ENCODE measurements at regions of chr2 and their contacts with region 1.

Region 1: GRCh38 chr2:95165129-95166064 is at the start of gene ZNF2:
- DNase-seq: peak; percentile 91 to 99 (median 96)
- ATAC-seq: peak; percentile 92
- H3K4me3 ChIP-seq: peak within 1 kb of the TSS; percentile 97
- H3K4me3 Mint-ChIP-seq: peak within 1 kb of the TSS; percentile 97
- H3K27ac ChIP-seq: peak within 1 kb of the TSS; percentile 86 to 92
- H3K27ac Mint-ChIP-seq: peak within 1 kb of the TSS; percentile 96
- H3K4me1 ChIP-seq: peaks cover 15% of the 10 kb centered on the region
- H3K4me1 Mint-ChIP-seq: peaks cover 36% of the 10 kb centered on the region
- H3K27me3 ChIP-seq: no peaks in the 10 kb centered on the region
- H3K27me3 Mint-ChIP-seq: no peaks in the 10 kb centered on the region
- CTCF ChIP-seq: no peak
- total RNA-seq, gene ZNF2: 0.53 TPM in 1 of 2 experiments, not detected in the other

Region 2: GRCh38 chr2:95121407-95122196 is 43.8 kb before region 1 on chr2 and contains the start of gene MRPS5:
- CTCF ChIA-PET with region 1: interaction called, 6 read pairs
- POLR2A ChIA-PET with region 1: interaction called, 46 read pairs
- intact Hi-C with region 1: no loop called
- DNase-seq: peak; percentile 68 to 91 (median 82)
- ATAC-seq: peak; percentile 89
- H3K4me3 ChIP-seq: peak within 1 kb of the TSS; percentile 81
- H3K4me3 Mint-ChIP-seq: peak within 1 kb of the TSS; percentile 95
- H3K27ac ChIP-seq: peak within 1 kb of the TSS; percentile 59 to 74
- H3K27ac Mint-ChIP-seq: peak within 1 kb of the TSS; percentile 94
- H3K4me1 ChIP-seq: peaks cover 31% of the 10 kb centered on the region
- H3K4me1 Mint-ChIP-seq: peaks cover 52% of the 10 kb centered on the region
- H3K27me3 ChIP-seq: no peaks in the 10 kb centered on the region
- H3K27me3 Mint-ChIP-seq: no peaks in the 10 kb centered on the region
- CTCF ChIP-seq: no peak
- total RNA-seq, gene MRPS5: 15.3 to 16.3 TPM

Region 3: GRCh38 chr2:95185973-95186372 is 20.6 kb after region 1 on chr2:
- CTCF ChIA-PET with region 1: interaction called, 4 read pairs
- POLR2A ChIA-PET with region 1: no interaction called
- intact Hi-C with region 1: loop called in 1 of 2 experiments (anchors 1 kb)
- DNase-seq: no peak
- ATAC-seq: no peak
- H3K4me3 ChIP-seq: no peak overlapping the region
- H3K4me3 Mint-ChIP-seq: no peak overlapping the region
- H3K27ac ChIP-seq: no peak overlapping the region
- H3K27ac Mint-ChIP-seq: no peak overlapping the region
- H3K4me1 ChIP-seq: no peaks in the 10 kb centered on the region
- H3K4me1 Mint-ChIP-seq: no peaks in the 10 kb centered on the region
- H3K27me3 ChIP-seq: peaks cover 0 to 2% of the 10 kb centered on the region in 2 experiments
- H3K27me3 Mint-ChIP-seq: peaks cover 10% of the 10 kb centered on the region
- CTCF ChIP-seq: no peak

Region 4: DNA sequence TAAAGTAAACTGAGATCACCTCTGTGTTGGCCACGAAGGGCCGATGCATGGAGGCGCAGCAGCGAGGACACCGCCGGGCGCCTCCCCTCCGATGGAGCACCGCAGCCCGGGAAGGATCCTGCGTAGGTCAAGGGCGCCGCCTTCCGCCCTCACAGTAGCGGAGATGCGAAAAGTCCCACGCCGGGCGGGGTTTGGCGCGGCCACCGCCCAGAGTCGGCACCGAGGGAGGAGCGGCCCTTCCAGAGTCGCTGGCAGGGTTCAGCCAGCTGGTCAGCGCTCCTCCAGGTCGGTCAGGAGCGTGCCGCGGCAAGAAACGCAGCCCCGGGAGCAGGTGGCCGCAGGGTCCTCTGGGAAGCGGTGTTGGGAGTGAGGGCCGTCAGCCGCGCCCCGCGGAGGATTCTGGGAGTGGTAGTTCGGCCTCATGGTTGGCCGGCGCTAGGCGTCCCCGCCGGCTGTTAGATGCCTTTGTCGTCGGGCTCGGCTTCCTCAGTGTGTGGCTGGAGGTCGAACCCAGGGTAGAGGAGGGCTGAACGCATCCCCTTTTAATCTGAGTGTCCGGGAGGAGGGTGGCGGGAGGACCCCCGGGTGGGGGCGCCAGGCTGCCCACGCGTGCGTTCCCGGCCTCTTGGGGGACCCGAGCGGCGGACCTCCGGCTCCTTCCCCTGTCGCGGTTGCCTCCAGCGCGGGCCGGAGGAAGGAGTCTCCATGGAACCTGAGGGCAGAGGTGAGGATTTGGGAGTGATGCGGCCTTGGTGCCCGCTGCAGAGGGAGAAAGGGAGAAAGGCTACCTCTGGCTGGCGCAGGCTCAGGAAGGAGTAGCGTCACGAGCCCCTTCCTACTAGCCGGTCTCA is 41.9 kb after region 1 on chr2 and contains the start of gene ZNF892:
- CTCF ChIA-PET with region 1: no interaction called
- POLR2A ChIA-PET with region 1: no interaction called
- intact Hi-C with region 1: loop called (anchors 1 to 2 kb)
- DNase-seq: peak; percentile 55 to 87 (median 74)
- ATAC-seq: peak; percentile 95
- H3K4me3 ChIP-seq: peak within 1 kb of the TSS; percentile 89
- H3K4me3 Mint-ChIP-seq: peak within 1 kb of the TSS; percentile 95
- H3K27ac ChIP-seq: peak within 1 kb of the TSS; percentile 63 to 77
- H3K27ac Mint-ChIP-seq: peak within 1 kb of the TSS; percentile 80
- H3K4me1 ChIP-seq: peaks cover 17% of the 10 kb centered on the region
- H3K4me1 Mint-ChIP-seq: peaks cover 29% of the 10 kb centered on the region
- H3K27me3 ChIP-seq: no peaks in the 10 kb centered on the region
- H3K27me3 Mint-ChIP-seq: no peaks in the 10 kb centered on the region
- CTCF ChIP-seq: peak; percentile 61
- total RNA-seq, gene ZNF892: 0.82 to 1.1 TPM

Region 5: GRCh38 chr2:95259765-95260417 is 94.5 kb after region 1 on chr2:
- CTCF ChIA-PET with region 1: no interaction called
- POLR2A ChIA-PET with region 1: no interaction called
- intact Hi-C with region 1: no loop called
- DNase-seq: no peak
- ATAC-seq: no peak
- H3K4me3 ChIP-seq: no peak overlapping the region
- H3K4me3 Mint-ChIP-seq: no peak overlapping the region
- H3K27ac ChIP-seq: no peak overlapping the region
- H3K27ac Mint-ChIP-seq: no peak overlapping the region
- H3K4me1 ChIP-seq: no peaks in the 10 kb centered on the region
- H3K4me1 Mint-ChIP-seq: no peaks in the 10 kb centered on the region
- H3K27me3 ChIP-seq: peaks cover 0 to 4% of the 10 kb centered on the region in 2 experiments
- H3K27me3 Mint-ChIP-seq: peaks cover 25% of the 10 kb centered on the region
- CTCF ChIP-seq: no peak

Region 6: DNA sequence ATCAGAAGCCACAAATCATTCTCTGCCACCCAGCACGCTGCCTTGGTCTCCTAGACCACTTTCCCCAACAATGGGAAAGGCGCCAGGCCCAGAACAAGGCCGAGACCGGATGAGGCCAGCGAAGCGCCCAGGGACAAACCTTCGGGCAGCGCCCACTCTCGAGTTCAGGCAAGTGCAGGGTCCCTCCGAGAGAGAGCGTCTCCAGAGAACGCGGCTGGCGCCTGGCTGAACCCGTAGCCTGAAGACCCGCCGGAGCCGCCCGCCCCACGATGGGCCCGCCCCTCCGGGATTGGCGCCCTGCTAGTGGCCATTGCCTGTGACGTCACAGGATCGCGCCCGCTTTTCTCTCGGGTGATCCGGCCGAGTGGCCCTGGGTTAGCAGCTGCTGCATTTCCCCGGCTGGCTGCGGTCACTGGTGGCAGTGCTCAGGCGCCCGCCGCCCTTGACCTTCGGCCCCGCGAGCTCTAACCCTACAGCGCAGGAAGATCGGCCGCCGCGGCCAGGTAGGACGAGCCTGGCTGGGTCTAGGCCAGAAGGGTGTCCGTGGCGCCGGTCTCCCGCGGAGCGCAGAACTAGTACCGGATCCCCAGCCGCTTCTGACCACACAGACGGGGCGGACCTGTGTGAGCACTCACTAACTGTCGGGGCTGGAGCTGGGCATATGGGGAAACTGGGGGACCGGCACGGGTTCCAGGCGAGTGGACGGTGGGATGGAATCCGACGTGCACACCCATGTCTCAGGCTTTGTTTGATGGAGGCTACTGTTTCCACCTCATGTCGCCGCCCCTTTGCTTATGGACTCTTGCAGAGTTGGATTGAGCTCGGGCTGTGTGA is 237.2 kb after region 1 on chr2 and contains the start of gene FAHD2A:
- CTCF ChIA-PET with region 1: no interaction called
- POLR2A ChIA-PET with region 1: interaction called, 8 read pairs
- intact Hi-C with region 1: loop called (anchors 1 kb)
- DNase-seq: peak; percentile 81 to 95 (median 92)
- ATAC-seq: peak; percentile 93
- H3K4me3 ChIP-seq: peak within 1 kb of the TSS; percentile 79
- H3K4me3 Mint-ChIP-seq: peak within 1 kb of the TSS; percentile 99
- H3K27ac ChIP-seq: peak within 1 kb of the TSS; percentile 41 to 57
- H3K27ac Mint-ChIP-seq: peak within 1 kb of the TSS; percentile 88
- H3K4me1 ChIP-seq: peaks cover 17% of the 10 kb centered on the region
- H3K4me1 Mint-ChIP-seq: peaks cover 27% of the 10 kb centered on the region
- H3K27me3 ChIP-seq: no peaks in the 10 kb centered on the region
- H3K27me3 Mint-ChIP-seq: no peaks in the 10 kb centered on the region
- CTCF ChIP-seq: no peak
- total RNA-seq, gene FAHD2A: 26.5 to 27.5 TPM

Measured in CD4-positive, alpha-beta T cell (primary cell).